ENCODE measurements at regions of chr18 and their contacts with region 1.

Region 1: DNA sequence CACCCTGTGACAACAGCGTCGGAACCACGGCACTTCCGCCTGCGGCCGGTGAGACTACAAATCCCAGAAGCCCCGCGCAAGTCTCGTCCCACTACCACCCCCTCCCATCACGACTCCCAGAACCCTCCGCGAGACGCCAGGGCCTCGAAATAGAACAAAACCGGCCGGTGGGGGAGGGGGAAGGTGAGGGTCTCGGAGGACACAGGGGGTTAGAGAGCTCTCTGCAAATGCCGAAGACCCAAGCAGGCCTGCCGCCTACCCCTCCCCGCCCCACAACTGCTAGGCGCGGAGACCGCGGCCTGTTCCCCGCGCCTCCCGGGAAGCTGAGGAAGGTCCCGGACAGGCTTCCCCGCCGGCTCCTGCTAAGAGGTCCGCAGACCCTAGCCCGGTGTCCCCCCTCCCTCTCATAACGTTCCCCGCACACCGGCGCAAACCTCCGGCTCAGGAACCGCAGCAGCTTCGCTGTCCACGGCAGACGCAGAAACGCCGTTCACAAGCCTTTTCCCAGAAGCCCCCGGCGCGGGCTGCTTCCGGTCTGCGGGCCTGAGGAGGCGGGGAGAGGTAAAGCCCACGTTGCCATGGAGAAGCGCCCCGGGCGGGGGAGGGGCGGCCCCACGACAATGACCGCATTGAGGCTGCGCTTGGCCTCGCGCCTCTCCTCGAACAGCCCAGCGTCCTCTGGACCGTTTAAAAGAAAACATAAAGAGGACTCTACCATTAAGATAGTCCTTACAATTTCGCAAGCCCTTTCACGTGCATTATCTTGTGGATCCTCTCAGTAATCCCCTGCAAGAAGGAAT is at the start of gene ZNF24:
- DNase-seq: peak; percentile 89 to 95 (median 89)
- H3K4me3 ChIP-seq: peak within 1 kb of the TSS; percentile 87 to 96
- H3K4me3 Mint-ChIP-seq: peak within 1 kb of the TSS; percentile 94 to 99 (median 98)
- H3K27ac ChIP-seq: peak within 1 kb of the TSS; percentile 99
- H3K27ac Mint-ChIP-seq: peak within 1 kb of the TSS; percentile 96 to 99 (median 98)
- H3K4me1 ChIP-seq: peaks cover 45% of the 10 kb centered on the region
- H3K4me1 Mint-ChIP-seq: peaks cover 32 to 58% (median 44%) of the 10 kb centered on the region in 4 donors
- H3K27me3 ChIP-seq: no peaks in the 10 kb centered on the region
- H3K27me3 Mint-ChIP-seq: no peaks in the 10 kb centered on the region
- total RNA-seq, gene ZNF24: 89.1 to 90.5 TPM

Region 2: DNA sequence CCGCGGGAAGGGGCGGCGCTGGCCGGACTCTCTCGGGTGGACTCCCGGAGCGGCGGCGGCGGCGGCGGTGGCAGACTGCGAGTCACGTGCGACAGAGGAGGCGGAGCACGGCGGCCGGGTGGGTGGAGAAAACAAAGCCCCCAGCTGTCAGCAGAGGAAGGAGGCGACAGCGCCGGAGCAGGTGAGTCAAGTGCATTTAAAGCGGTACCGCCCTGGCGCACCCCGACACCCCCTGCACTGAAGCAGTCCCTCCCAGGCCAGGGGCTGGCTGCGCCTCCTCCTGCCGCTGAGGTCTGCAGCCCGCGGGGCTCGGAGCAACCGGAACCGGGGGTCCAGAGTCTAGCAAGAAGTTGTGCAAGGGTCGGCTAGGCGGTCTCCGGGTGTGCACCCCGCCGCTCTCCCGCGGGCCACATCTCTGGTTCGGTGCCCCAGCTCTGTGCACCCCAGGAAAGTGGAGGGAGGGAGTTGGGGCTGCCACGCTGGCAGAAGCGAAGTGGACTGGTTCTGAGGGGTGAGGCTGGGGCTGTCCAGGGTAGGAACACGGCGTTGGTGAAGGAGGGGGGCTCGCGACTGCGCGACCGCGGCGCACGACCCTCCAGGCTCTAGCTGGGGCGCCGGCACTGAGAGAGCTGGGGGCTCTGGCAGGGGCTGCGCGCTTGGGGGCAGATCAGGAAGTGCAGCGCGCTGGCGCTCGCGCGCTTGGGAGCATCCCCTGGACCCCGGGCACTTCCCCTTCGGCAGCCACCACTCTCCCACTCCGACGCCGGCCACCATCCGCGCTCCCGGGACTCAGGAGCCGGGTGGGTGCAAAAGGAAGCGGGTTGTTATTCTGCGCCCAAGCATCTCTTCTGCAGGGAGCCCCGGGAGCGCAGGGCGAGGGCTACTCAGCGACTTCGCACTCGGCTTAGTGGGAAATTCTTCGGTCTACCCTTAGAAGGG is 367.0 kb before region 1 on chr18:
- CTCF ChIA-PET with region 1: no interaction called
- POLR2A ChIA-PET with region 1: no interaction called
- intact Hi-C with region 1: loop called (anchors 2 kb)
- DNase-seq: peak; percentile 58 to 81 (median 66)
- H3K4me3 ChIP-seq: peak overlapping the region; percentile 60 to 82
- H3K4me3 Mint-ChIP-seq: peak overlapping the region; percentile 90 to 97 (median 94)
- H3K27ac ChIP-seq: no peak overlapping the region
- H3K27ac Mint-ChIP-seq: peak overlapping the region in 4 of 7 donors; percentile 83 to 90 (median 88)
- H3K4me1 ChIP-seq: peaks cover 14% of the 10 kb centered on the region
- H3K4me1 Mint-ChIP-seq: peaks cover 15 to 30% (median 19%) of the 10 kb centered on the region in 4 donors
- H3K27me3 ChIP-seq: peaks cover 9% of the 10 kb centered on the region
- H3K27me3 Mint-ChIP-seq: peaks cover 10 to 12% of the 10 kb centered on the region in 2 donors

Region 3: DNA sequence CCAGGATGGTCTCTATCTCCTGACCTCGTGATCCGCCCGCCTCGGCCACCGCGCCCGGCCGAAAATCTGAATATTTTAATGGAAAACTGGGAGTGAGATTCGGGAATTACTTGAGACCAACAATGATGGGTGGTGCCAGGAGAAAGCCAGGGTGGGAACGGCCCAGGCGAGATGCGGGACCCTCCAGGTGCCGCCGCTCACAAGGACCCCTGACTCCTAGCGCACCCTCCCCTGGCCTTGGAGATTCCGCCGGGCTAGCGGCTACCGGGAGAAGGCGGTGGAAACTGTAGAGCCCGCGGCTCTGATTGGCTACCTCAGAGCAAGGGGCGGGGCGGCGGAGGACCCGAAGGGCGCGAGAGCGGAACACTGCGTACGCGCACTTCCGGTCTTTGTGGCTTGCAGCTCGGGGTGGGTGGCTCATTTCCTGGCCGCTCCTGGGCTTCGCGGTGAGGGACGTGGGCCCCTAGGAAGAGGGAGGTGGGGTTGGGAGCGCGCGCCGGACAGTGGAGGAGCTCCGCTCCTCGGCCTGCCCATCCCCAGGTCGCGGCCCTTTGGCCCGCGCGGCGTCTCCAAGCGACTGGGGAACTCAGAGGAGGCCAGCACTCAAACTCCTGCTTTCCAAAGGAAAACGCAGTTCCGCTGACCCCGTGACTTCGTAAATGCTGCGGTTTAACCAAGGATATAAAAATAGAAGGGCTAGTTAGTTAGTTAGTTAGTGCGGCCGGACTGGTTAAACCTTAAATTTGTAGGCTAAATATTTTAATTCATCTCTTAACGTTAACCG is 103.3 kb before region 1 on chr18 and contains the start of gene ZNF397:
- CTCF ChIA-PET with region 1: interaction called, 6 read pairs
- POLR2A ChIA-PET with region 1: interaction called, 20 read pairs
- intact Hi-C with region 1: loop called (anchors 1 kb)
- DNase-seq: peak; percentile 91 to 94 (median 92)
- H3K4me3 ChIP-seq: peak within 1 kb of the TSS; percentile 81 to 90
- H3K4me3 Mint-ChIP-seq: peak within 1 kb of the TSS; percentile 96 to 98 (median 96)
- H3K27ac ChIP-seq: peak within 1 kb of the TSS; percentile 95
- H3K27ac Mint-ChIP-seq: peak within 1 kb of the TSS; percentile 94 to 100 (median 99)
- H3K4me1 ChIP-seq: peaks cover 17% of the 10 kb centered on the region
- H3K4me1 Mint-ChIP-seq: peaks cover 10 to 40% (median 15%) of the 10 kb centered on the region in 4 donors
- H3K27me3 ChIP-seq: no peaks in the 10 kb centered on the region
- H3K27me3 Mint-ChIP-seq: no peaks in the 10 kb centered on the region
- total RNA-seq, gene ZNF397: 56.1 to 58.5 TPM

Region 4: GRCh38 chr18:35290073-35290735 is 53.9 kb before region 1 on chr18 and contains the start of gene ZSCAN30:
- CTCF ChIA-PET with region 1: interaction called, 4 read pairs
- POLR2A ChIA-PET with region 1: interaction called, 29 read pairs
- intact Hi-C with region 1: loop called (anchors 1 kb)
- DNase-seq: peak; percentile 94 to 96 (median 95)
- H3K4me3 ChIP-seq: peak within 1 kb of the TSS; percentile 84 to 89
- H3K4me3 Mint-ChIP-seq: peak within 1 kb of the TSS; percentile 96 to 100 (median 98)
- H3K27ac ChIP-seq: peak within 1 kb of the TSS; percentile 84
- H3K27ac Mint-ChIP-seq: peak within 1 kb of the TSS; percentile 98 to 100 (median 99)
- H3K4me1 ChIP-seq: peaks cover 36% of the 10 kb centered on the region
- H3K4me1 Mint-ChIP-seq: peaks cover 36 to 60% (median 46%) of the 10 kb centered on the region in 4 donors
- H3K27me3 ChIP-seq: no peaks in the 10 kb centered on the region
- H3K27me3 Mint-ChIP-seq: no peaks in the 10 kb centered on the region
- total RNA-seq, gene ZSCAN30: 16.9 to 18.4 TPM

Region 5: GRCh38 chr18:35376742-35377695 is 32.9 kb after region 1 on chr18 and contains the start of gene ZNF396:
- CTCF ChIA-PET with region 1: no interaction called
- POLR2A ChIA-PET with region 1: interaction called, 3 read pairs
- intact Hi-C with region 1: loop called (anchors 1 kb)
- DNase-seq: peak; percentile 57 to 75 (median 65)
- H3K4me3 ChIP-seq: peak within 1 kb of the TSS; percentile 45 to 70
- H3K4me3 Mint-ChIP-seq: peak within 1 kb of the TSS; percentile 82 to 92 (median 88)
- H3K27ac ChIP-seq: peak within 1 kb of the TSS; percentile 34
- H3K27ac Mint-ChIP-seq: peak within 1 kb of the TSS; percentile 37 to 91 (median 86)
- H3K4me1 ChIP-seq: peaks cover 7% of the 10 kb centered on the region
- H3K4me1 Mint-ChIP-seq: peaks cover 0 to 12% (median 2%) of the 10 kb centered on the region in 4 donors
- H3K27me3 ChIP-seq: no peaks in the 10 kb centered on the region
- H3K27me3 Mint-ChIP-seq: peaks cover 0 to 1% of the 10 kb centered on the region in 2 donors
- total RNA-seq, gene ZNF396: 5.5 to 7.3 TPM

Measured in CD4-positive, alpha-beta memory T cell (primary cell).